Activated CD8-positive, alpha-beta T cell treated with anti-CD3 and anti-CD28 coated beads, Interleukin-2, amount 10 ng/mL, durations not matched to agents 7 days and 5 days (primary cell): ENCODE measurements at regions of chr6 and their contacts with region 1.

Region 1: GRCh38 chr6:27809939-27810767 is 102.0 kb downstream of the OR2B2 start:
- DNase-seq: peak; percentile 89
- ATAC-seq: peak; percentile 32
- H3K4me3 Mint-ChIP-seq: peak overlapping the region; percentile 95
- H3K27ac Mint-ChIP-seq: peak overlapping the region; percentile 98
- H3K4me1 Mint-ChIP-seq: peaks cover 66% of the 10 kb centered on the region
- H3K27me3 Mint-ChIP-seq: peaks cover 2% of the 10 kb centered on the region

Region 2: GRCh38 chr6:26122793-26123674 is 1687.1 kb before region 1 on chr6:
- CTCF ChIA-PET with region 1: no interaction called
- POLR2A ChIA-PET with region 1: interaction called, 54 read pairs
- DNase-seq: peak; percentile 98
- ATAC-seq: peak; percentile 50
- H3K4me3 Mint-ChIP-seq: peak overlapping the region; percentile 95
- H3K27ac Mint-ChIP-seq: peak overlapping the region; percentile 100
- H3K4me1 Mint-ChIP-seq: peaks cover 44% of the 10 kb centered on the region
- H3K27me3 Mint-ChIP-seq: peaks cover 1% of the 10 kb centered on the region

Region 3: DNA sequence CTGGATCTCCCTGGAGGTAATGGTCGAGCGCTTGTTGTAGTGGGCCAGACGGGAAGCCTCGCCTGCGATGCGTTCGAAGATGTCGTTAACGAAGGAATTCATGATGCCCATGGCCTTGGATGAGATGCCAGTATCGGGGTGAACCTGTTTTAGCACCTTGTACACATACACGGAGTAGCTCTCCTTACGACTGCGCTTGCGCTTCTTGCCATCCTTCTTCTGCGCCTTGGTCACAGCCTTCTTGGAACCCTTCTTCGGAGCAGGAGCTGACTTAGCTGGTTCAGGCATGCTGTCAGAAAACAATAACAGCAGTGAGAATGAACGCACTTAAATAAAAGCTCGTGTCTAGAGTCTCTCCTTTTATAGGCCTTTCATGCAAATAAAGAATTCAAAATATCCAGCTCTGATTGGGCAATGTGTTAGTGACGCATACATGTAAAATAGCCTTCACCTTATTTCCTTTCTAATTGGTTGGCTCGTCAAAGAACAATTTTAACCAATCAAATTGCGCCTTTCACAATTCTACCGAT is 1593.7 kb before region 1 on chr6:
- CTCF ChIA-PET with region 1: no interaction called
- POLR2A ChIA-PET with region 1: interaction called, 30 read pairs
- DNase-seq: peak; percentile 93
- ATAC-seq: peak; percentile 67
- H3K4me3 Mint-ChIP-seq: no peak overlapping the region
- H3K27ac Mint-ChIP-seq: no peak overlapping the region
- H3K4me1 Mint-ChIP-seq: peaks cover 43% of the 10 kb centered on the region
- H3K27me3 Mint-ChIP-seq: no peaks in the 10 kb centered on the region

Region 4: DNA sequence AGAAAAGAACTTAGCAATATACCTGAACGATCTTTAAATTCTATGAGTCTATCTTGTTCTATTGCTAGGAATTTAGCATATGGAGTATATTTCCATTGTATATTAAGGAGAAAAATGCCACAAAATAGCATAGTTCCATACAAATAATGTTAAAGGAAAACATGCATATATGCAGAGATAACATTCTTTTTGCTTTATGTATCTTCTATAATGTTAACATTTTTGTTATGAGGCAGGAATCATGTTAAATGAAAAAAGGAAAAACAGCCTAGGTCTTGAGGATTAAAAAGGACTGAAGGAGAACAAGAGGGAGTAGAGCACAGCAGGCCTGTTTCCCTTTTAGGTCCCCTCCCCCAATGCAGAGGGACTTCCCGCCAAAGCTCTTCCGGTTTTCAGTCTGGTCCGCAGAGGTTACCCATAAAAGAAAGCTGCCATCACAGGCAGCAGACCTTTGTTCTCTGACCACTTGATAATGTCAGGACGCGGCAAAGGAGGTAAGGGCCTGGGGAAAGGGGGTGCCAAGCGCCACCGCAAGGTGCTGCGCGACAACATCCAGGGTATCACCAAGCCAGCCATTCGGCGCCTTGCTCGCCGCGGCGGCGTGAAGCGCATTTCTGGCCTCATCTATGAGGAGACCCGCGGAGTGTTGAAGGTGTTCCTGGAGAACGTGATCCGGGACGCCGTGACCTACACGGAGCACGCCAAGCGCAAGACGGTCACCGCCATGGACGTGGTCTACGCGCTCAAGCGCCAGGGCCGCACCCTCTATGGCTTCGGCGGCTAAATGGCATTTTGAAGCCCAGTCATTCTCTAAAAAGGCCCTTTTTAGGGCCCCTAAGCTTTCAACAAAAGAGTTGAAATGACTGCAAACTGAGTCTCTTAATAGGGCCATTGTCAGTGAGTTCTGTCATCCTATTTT is 671.1 kb before region 1 on chr6:
- CTCF ChIA-PET with region 1: no interaction called
- POLR2A ChIA-PET with region 1: interaction called, 545 read pairs
- DNase-seq: peak; percentile 87
- ATAC-seq: peak; percentile 68
- H3K4me3 Mint-ChIP-seq: peak overlapping the region; percentile 95
- H3K27ac Mint-ChIP-seq: peak overlapping the region; percentile 98
- H3K4me1 Mint-ChIP-seq: peaks cover 71% of the 10 kb centered on the region
- H3K27me3 Mint-ChIP-seq: no peaks in the 10 kb centered on the region

Region 5: DNA sequence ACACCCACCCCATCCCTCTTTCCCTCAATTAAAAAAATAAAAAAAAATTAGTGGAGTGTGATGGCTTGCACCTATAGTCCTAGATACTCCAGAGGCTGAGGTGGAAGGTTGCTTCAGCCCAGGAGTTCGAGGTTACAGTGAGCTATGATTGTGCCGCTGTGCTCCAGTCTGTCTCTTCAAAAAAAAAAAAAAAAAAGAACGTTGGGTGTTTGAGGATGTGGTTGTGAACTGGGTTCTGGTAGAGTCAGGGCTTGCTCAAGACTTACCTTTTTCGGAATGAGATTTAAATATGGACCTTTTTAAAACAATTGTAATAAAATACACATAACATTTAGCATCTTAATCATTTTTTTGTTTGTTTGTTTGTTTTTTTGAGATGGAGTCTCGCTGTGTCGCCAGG is 109.8 kb before region 1 on chr6:
- CTCF ChIA-PET with region 1: no interaction called
- POLR2A ChIA-PET with region 1: no interaction called
- DNase-seq: no peak
- ATAC-seq: no peak
- H3K4me3 Mint-ChIP-seq: no peak overlapping the region
- H3K27ac Mint-ChIP-seq: peak overlapping the region; percentile 41
- H3K4me1 Mint-ChIP-seq: peaks cover 34% of the 10 kb centered on the region
- H3K27me3 Mint-ChIP-seq: no peaks in the 10 kb centered on the region

Region 6: DNA sequence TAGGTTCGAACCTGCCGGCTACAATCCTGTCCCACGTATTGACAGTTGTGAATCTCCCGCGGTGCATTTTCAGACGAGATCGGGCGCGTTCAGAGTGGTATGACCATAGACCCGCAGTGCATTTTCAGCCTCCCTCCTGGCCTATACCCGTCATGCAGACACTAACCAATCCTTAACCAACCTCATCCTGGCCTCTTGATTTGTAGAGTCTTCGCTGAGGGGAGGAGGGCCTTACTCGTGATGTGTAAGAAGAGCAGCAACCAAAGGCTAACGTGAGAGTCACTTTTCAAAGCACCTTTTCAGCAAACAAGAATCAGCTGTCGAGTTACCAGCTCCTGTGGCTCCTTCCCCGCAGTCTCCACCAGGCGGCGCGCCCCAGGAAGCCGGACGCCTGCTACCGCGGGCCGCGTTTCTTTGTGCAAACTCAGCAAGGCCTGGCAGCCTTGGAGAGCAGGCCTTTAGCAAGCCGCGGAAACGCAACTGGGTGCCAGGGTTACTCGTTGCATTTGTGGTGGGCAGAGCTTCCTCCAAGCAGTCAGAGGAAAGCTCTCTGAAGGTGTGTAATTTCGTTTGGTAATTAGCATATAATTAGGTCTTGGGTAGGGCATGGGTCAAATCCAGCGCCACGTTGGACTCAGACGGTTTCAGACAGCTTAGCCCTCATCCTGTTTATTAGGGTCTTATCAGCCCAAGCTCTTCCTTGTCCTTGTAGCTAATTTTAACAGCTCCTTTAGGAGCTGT is 37.7 kb before region 1 on chr6:
- CTCF ChIA-PET with region 1: interaction called, 17 read pairs
- POLR2A ChIA-PET with region 1: interaction called, 12 read pairs
- DNase-seq: peak; percentile 93
- ATAC-seq: peak; percentile 100
- H3K4me3 Mint-ChIP-seq: no peak overlapping the region
- H3K27ac Mint-ChIP-seq: peak overlapping the region; percentile 8
- H3K4me1 Mint-ChIP-seq: peaks cover 22% of the 10 kb centered on the region
- H3K27me3 Mint-ChIP-seq: peaks cover 20% of the 10 kb centered on the region

Region 7: GRCh38 chr6:27864906-27865849 is 55.0 kb after region 1 on chr6:
- CTCF ChIA-PET with region 1: interaction called, 6 read pairs
- POLR2A ChIA-PET with region 1: interaction called, 1,287 read pairs
- DNase-seq: peak; percentile 90
- ATAC-seq: peak; percentile 57
- H3K4me3 Mint-ChIP-seq: peak overlapping the region; percentile 87
- H3K27ac Mint-ChIP-seq: peak overlapping the region; percentile 99
- H3K4me1 Mint-ChIP-seq: peaks cover 55% of the 10 kb centered on the region
- H3K27me3 Mint-ChIP-seq: no peaks in the 10 kb centered on the region